ENCODE measurements at regions of chr2 and their contacts with region 1.

Region 1: GRCh38 chr2:1817256-1818051 is 73.1 kb upstream of the PXDN start:
- DNase-seq: peak; percentile 98
- ATAC-seq: peak; percentile 94
- H3K4me3 ChIP-seq: no peak overlapping the region
- H3K27ac ChIP-seq: peak overlapping the region; percentile 76
- H3K4me1 ChIP-seq: peaks cover 14% of the 10 kb centered on the region
- H3K27me3 ChIP-seq: no peaks in the 10 kb centered on the region
- CTCF ChIP-seq: peak; percentile 98
- POLR2A ChIP-seq: no peak; the same call in 1 of the 2 replicates
- RAD21 ChIP-seq: peak; percentile 97

Region 2: DNA sequence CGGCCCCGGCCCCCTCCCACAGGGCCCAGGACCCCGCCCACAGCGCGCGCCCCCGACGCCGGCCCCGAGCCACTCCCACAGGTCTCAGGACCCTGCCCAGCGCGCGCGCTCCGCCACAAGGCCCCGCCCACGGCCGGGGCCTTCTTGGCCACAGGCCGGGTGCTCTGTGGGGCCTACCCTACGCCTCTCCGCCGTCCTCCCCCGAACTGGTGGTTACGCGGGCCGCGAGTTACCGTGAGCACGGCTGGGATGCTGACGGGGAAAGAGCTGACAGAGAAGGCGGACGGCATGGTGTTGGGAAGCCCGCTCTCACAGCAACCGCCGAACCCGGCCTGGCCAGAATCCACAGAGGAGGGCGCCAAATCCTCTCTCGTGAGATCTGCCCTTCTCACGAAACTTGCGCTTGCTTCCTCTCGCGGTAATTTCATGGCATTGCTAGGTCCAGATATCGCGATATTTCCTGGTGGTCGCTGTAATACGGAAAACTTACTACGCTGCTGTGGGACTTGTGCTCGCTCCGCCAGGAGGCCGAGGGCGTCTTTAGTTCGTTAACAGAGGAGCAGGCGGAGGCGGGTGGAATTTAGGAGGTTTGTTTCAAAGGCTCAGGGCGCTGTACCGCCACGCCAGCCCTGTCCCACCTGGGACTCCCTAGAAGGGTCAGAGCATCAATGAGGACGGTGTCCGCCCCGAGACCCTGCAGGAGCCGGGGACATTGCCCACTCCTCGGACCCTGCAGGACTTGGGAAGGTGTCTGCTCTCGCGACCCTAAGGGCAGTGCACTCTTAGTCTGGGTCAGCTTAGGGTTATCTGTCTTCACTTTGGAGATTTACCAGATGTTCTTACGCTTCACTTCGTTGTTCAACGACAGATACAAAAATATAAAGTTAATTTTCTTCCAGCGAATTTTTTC is 1140.1 kb before region 1 on chr2 and contains the start of gene TMEM18:
- CTCF ChIA-PET with region 1: no interaction called
- POLR2A ChIA-PET with region 1: no interaction called
- dilution Hi-C with region 1: no loop called
- in situ Hi-C with region 1: loop called (anchors 10 kb)
- intact Hi-C with region 1: loop called (anchors 2 kb)
- DNase-seq: peak; percentile 99
- ATAC-seq: peak; percentile 84
- H3K4me3 ChIP-seq: peak within 1 kb of the TSS; percentile 70
- H3K27ac ChIP-seq: peak within 1 kb of the TSS; percentile 94
- H3K4me1 ChIP-seq: peaks cover 19% of the 10 kb centered on the region
- H3K27me3 ChIP-seq: no peaks in the 10 kb centered on the region
- CTCF ChIP-seq: peak; percentile 32; the same call in 1 of the 2 replicates
- POLR2A ChIP-seq: peak; percentile 92
- RAD21 ChIP-seq: no peak
- total RNA-seq, gene TMEM18: 15.2 and 21.9 TPM in 2 replicates

Region 3: GRCh38 chr2:1591978-1592907 is 225.2 kb before region 1 on chr2:
- CTCF ChIA-PET with region 1: no interaction called
- POLR2A ChIA-PET with region 1: no interaction called
- dilution Hi-C with region 1: no loop called
- in situ Hi-C with region 1: no loop called
- intact Hi-C with region 1: loop called (anchors 1 kb)
- DNase-seq: peak; percentile 77
- ATAC-seq: peak; percentile 69
- H3K4me3 ChIP-seq: no peak overlapping the region
- H3K27ac ChIP-seq: no peak overlapping the region
- H3K4me1 ChIP-seq: peaks cover 21% of the 10 kb centered on the region
- H3K27me3 ChIP-seq: peaks cover 2% of the 10 kb centered on the region; the same call in 1 of the 2 replicates
- CTCF ChIP-seq: peak; percentile 72
- POLR2A ChIP-seq: 0 out of 2 replicates have a peak, but pooled peaks have one; percentile 13
- RAD21 ChIP-seq: peak; percentile 79

Region 4: DNA sequence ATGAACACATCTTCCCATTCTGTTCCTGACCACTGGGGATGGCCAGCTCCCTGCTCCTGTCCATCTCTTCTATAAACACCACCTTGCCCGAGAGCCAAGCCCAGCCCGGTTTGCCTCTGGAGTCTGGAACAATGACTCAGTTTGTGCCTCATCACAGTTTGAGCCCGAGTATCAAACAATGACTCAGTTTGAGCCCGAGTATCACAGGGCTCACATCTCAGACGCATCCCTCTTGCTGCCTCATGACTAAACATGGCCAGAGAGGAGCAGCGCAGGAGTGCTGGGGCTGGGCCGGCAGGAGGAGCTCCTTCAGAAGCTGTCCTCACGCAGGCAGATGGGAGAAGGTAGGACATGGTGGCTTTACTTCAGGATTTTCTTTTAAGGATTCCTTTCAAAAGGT is 141.8 kb before region 1 on chr2:
- CTCF ChIA-PET with region 1: interaction called, 3 read pairs
- POLR2A ChIA-PET with region 1: no interaction called
- dilution Hi-C with region 1: no loop called
- in situ Hi-C with region 1: no loop called
- intact Hi-C with region 1: loop called (anchors 1 kb)
- DNase-seq: peak; percentile 99
- ATAC-seq: peak; percentile 99
- H3K4me3 ChIP-seq: no peak overlapping the region
- H3K27ac ChIP-seq: peak overlapping the region; percentile 60
- H3K4me1 ChIP-seq: peaks cover 9% of the 10 kb centered on the region
- H3K27me3 ChIP-seq: no peaks in the 10 kb centered on the region
- CTCF ChIP-seq: peak; percentile 91
- POLR2A ChIP-seq: peak; percentile 78
- RAD21 ChIP-seq: peak; percentile 85

Region 5: GRCh38 chr2:1750933-1751766 is 66.3 kb before region 1 on chr2:
- CTCF ChIA-PET with region 1: interaction called, 7 read pairs
- POLR2A ChIA-PET with region 1: no interaction called
- dilution Hi-C with region 1: no loop called
- in situ Hi-C with region 1: no loop called
- intact Hi-C with region 1: loop called (anchors 2 kb)
- DNase-seq: peak; percentile 86
- ATAC-seq: peak; percentile 93
- H3K4me3 ChIP-seq: no peak overlapping the region
- H3K27ac ChIP-seq: 0 out of 2 replicates have a peak overlapping the region, but pooled peaks have one; percentile 4
- H3K4me1 ChIP-seq: peaks cover 19% of the 10 kb centered on the region
- H3K27me3 ChIP-seq: no peaks in the 10 kb centered on the region
- CTCF ChIP-seq: peak; percentile 95
- POLR2A ChIP-seq: no peak
- RAD21 ChIP-seq: peak; percentile 88

Region 6: DNA sequence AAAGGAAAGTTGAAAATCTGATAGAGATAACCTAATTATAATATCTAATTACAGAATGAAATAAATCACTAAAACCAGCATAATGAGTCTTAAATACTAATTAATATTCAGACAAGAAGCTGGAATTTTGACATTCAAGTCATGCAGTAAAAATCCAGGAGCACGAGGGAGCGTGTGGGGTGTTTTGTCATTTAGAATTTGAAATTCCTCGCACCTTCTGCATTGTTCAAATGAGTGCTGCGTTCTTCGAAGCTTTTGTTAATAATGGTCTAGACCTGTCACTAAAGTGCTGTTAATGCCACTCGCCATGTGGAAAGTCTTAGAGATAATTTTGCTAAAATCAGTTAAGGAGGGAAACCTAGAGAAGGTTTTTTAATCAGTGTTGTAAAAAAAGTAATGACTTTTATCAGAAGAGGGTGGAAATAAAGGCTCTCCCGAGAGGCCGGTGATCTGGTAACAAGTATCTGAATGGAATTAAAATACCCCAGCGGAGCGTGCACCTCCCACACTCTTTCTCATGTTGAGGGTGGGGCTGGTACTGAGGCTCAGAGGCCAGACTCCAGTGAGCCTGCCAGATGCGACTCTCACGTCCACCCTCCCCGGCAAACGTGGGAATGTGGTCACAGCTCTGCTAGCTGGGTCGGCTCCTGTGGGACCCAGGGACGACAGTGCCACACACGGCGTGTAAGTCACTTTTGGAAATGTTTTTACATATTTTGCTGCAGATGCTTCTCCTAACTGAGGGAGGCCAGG is 583.0 kb after region 1 on chr2:
- CTCF ChIA-PET with region 1: no interaction called
- POLR2A ChIA-PET with region 1: no interaction called
- dilution Hi-C with region 1: no loop called
- in situ Hi-C with region 1: no loop called
- intact Hi-C with region 1: no loop called
- DNase-seq: no peak
- ATAC-seq: no peak
- H3K4me3 ChIP-seq: no peak overlapping the region
- H3K27ac ChIP-seq: no peak overlapping the region
- H3K4me1 ChIP-seq: no peaks in the 10 kb centered on the region
- H3K27me3 ChIP-seq: no peaks in the 10 kb centered on the region
- CTCF ChIP-seq: no peak
- POLR2A ChIP-seq: no peak
- RAD21 ChIP-seq: no peak